CD4-positive, alpha-beta memory T cell (primary cell): ENCODE measurements at regions of chr1 and their contacts with region 1.

Region 1: GRCh38 chr1:224399887-224400286 is 34.7 kb downstream of the WDR26 start:
- DNase-seq: no peak
- H3K4me3 ChIP-seq: no peak overlapping the region
- H3K4me3 Mint-ChIP-seq: no peak overlapping the region
- H3K27ac ChIP-seq: no peak overlapping the region
- H3K27ac Mint-ChIP-seq: peak overlapping the region in 2 of 7 donors; percentile 66 to 77
- H3K4me1 ChIP-seq: no peaks in the 10 kb centered on the region
- H3K4me1 Mint-ChIP-seq: peaks cover 11 to 33% (median 22%) of the 10 kb centered on the region in 4 donors
- H3K27me3 ChIP-seq: no peaks in the 10 kb centered on the region
- H3K27me3 Mint-ChIP-seq: no peaks in the 10 kb centered on the region

Region 2: DNA sequence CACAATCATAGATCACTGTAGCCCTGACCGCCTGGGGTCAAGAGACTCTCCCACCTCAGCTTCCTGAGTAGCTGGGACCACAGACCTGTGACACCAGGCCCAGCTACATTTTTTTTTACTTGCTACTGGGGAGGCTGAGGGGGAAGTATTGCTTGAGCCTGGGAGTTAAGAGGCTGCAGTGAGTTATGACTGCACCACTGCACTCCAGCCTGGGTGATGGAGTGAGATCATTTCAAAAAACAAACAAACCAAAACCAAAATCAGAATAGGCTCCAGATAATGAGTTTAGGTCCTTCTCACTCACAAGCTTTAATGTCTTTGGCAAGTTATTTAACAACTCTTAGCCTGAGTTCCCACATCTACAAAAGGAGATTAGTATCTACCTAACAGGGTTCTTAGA is 11.9 kb after region 1 on chr1:
- CTCF ChIA-PET with region 1: interaction called, 3 read pairs
- POLR2A ChIA-PET with region 1: no interaction called
- intact Hi-C with region 1: loop called (anchors 2 kb)
- DNase-seq: no peak
- H3K4me3 ChIP-seq: no peak overlapping the region
- H3K4me3 Mint-ChIP-seq: no peak overlapping the region
- H3K27ac ChIP-seq: no peak overlapping the region
- H3K27ac Mint-ChIP-seq: peak overlapping the region in 3 of 7 donors; percentile 21 to 73 (median 70)
- H3K4me1 ChIP-seq: peaks cover 9% of the 10 kb centered on the region
- H3K4me1 Mint-ChIP-seq: peaks cover 16 to 34% (median 24%) of the 10 kb centered on the region in 4 donors
- H3K27me3 ChIP-seq: no peaks in the 10 kb centered on the region
- H3K27me3 Mint-ChIP-seq: no peaks in the 10 kb centered on the region

Region 3: GRCh38 chr1:224472806-224473205 is 72.9 kb after region 1 on chr1:
- CTCF ChIA-PET with region 1: no interaction called
- POLR2A ChIA-PET with region 1: no interaction called
- intact Hi-C with region 1: no loop called
- DNase-seq: no peak
- H3K4me3 ChIP-seq: no peak overlapping the region
- H3K4me3 Mint-ChIP-seq: no peak overlapping the region
- H3K27ac ChIP-seq: no peak overlapping the region
- H3K27ac Mint-ChIP-seq: no peak overlapping the region
- H3K4me1 ChIP-seq: no peaks in the 10 kb centered on the region
- H3K4me1 Mint-ChIP-seq: no peaks in the 10 kb centered on the region
- H3K27me3 ChIP-seq: no peaks in the 10 kb centered on the region
- H3K27me3 Mint-ChIP-seq: peaks cover 0 to 1% of the 10 kb centered on the region in 2 donors